Right cardiac atrium (tissue), 5 donors: ENCODE measurements at regions of chr1 and their contacts with region 1.

Region 1: GRCh38 chr1:94783342-94784264 is 36.6 kb upstream of the SLC44A3 start:
- DNase-seq: peak; percentile 88 to 95 (median 93)
- ATAC-seq: peak; percentile 98
- H3K4me3 ChIP-seq: no peak overlapping the region
- H3K27ac ChIP-seq: no peak overlapping the region
- H3K4me1 ChIP-seq: no peaks in the 10 kb centered on the region
- H3K27me3 ChIP-seq: no peaks in the 10 kb centered on the region

Region 2: DNA sequence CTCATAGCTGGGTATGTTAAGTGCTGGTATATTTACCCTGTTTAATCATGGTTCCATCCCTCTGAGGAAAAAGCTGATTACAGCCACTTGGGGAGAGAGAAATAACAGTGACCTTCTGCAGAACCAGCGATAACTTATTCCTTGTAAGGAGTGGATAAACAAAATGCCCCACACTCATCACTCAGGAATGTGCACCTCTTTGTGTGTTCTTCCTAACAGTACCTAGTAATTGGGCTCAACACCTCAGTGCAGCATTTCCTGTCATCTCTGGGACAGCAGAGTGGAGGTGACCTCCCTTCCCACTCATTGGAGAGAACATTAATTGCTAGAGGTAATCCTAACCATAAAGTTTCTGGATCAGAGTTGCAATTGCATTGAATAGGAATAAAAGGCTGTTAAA is 129.6 kb before region 1 on chr1:
- intact Hi-C with region 1: loop called in 1 of 4 experiments (anchors 10 kb)
- DNase-seq: no peak
- ATAC-seq: no peak
- H3K4me3 ChIP-seq: no peak overlapping the region
- H3K27ac ChIP-seq: peak overlapping the region; percentile 12
- H3K4me1 ChIP-seq: peaks cover 4% of the 10 kb centered on the region
- H3K27me3 ChIP-seq: no peaks in the 10 kb centered on the region

Region 3: DNA sequence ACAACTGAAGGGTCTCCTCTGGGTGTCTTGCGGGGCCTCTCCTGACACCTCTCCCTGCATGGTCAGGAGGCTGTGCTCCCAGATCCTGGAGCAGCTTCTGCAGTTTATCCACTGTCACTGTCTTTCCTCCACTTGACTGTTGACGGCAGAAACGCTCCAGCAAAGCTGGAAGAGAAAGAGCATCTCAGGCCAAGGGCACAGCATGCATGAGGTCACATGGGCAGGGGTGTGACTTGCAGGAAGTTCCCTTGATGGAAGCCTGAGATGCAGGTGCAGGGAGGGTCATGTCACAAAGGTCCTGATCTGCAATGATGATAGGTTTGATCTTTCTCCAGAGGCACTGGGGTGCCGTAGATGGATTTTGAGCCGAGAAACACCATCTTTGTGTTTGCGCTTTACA is 59.8 kb after region 1 on chr1:
- intact Hi-C with region 1: no loop called
- DNase-seq: no peak
- ATAC-seq: peak in 1 of 2 donors; percentile 9
- H3K4me3 ChIP-seq: no peak overlapping the region
- H3K27ac ChIP-seq: no peak overlapping the region
- H3K4me1 ChIP-seq: no peaks in the 10 kb centered on the region
- H3K27me3 ChIP-seq: no peaks in the 10 kb centered on the region